ENCODE measurements at regions of chr5 and their contacts with region 1.

Region 1: DNA sequence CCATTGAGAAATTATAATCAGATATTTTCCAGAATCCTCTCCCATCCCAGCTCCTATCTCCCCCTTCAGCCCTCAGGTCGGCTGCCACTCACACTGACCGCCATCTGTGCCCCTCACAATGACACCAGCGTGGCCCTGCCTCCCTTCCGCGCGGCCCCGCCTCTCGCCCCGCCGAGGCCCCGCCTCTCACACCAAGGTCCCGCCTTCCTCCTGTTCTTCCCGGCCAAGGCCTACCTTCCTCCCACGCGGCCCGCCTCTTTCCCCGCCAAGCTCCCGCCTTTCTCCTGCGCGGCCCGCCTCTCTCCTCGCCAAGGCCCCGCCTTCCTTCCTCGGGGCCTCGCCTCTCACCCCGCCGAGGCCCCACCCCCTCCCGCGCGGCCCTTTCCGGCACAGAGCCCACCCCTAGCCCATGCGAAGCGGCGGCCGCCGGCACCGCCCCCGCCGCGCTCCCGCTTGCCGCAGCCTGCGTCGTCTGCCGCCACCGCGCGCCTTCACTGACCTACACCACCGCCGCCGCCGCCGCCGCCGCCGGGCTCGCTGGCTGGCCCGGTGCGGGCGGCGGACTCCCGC is at the start of gene DNAJC21:
- DNase-seq: peak; percentile 97
- ATAC-seq: peak; percentile 91
- H3K4me3 Mint-ChIP-seq: peak within 1 kb of the TSS; percentile 96
- H3K27ac Mint-ChIP-seq: peak within 1 kb of the TSS; percentile 97
- H3K4me1 Mint-ChIP-seq: peaks cover 35% of the 10 kb centered on the region
- H3K27me3 Mint-ChIP-seq: no peaks in the 10 kb centered on the region
- total RNA-seq, gene DNAJC21: 58.6 to 59.3 TPM

Region 2: GRCh38 chr5:34915139-34915855 is 13.9 kb before region 1 on chr5 and contains the starts of genes BRIX1 and RAD1:
- CTCF ChIA-PET with region 1: interaction called, 29 read pairs
- POLR2A ChIA-PET with region 1: interaction called, 72 read pairs
- DNase-seq: peak; percentile 96
- ATAC-seq: peak; percentile 97
- H3K4me3 Mint-ChIP-seq: no peak within 1 kb of the TSS
- H3K27ac Mint-ChIP-seq: no peak within 1 kb of the TSS
- H3K4me1 Mint-ChIP-seq: peaks cover 40% of the 10 kb centered on the region
- H3K27me3 Mint-ChIP-seq: no peaks in the 10 kb centered on the region
- total RNA-seq, gene BRIX1: 41.6 to 46.4 TPM
- total RNA-seq, gene RAD1: 29.7 to 32.4 TPM

Region 3: DNA sequence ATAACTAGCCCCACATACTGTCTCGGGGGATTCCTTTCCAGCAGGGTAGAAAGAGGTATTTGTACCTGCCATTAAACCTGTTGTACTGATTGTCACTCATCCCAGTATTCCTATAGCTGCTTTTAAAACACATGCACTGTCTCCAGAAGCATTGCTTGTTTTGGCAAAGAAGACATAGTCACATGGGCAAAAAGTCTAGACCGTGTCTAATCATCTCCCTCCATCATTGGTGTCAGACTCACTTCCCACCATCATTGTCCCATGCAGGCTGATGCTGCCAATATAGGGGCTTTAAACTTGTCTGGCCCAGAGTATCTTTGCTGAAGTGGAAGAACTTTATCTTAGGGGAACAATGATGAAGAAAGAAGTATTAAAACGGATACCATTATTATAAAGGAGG is 12.7 kb after region 1 on chr5:
- CTCF ChIA-PET with region 1: interaction called, 8 read pairs
- POLR2A ChIA-PET with region 1: interaction called, 12 read pairs
- DNase-seq: no peak
- ATAC-seq: no peak
- H3K4me3 Mint-ChIP-seq: no peak overlapping the region
- H3K27ac Mint-ChIP-seq: no peak overlapping the region
- H3K4me1 Mint-ChIP-seq: no peaks in the 10 kb centered on the region
- H3K27me3 Mint-ChIP-seq: no peaks in the 10 kb centered on the region